Astrocyte of the cerebellum (primary cell): ENCODE measurements at regions of chr22 and their contacts with region 1.

Region 1: GRCh38 chr22:45640291-45640940 is 31.2 kb upstream of the ATXN10 start:
- DNase-seq: no peak
- H3K4me3 ChIP-seq: no peak overlapping the region
- CTCF ChIP-seq: no peak

Region 2: DNA sequence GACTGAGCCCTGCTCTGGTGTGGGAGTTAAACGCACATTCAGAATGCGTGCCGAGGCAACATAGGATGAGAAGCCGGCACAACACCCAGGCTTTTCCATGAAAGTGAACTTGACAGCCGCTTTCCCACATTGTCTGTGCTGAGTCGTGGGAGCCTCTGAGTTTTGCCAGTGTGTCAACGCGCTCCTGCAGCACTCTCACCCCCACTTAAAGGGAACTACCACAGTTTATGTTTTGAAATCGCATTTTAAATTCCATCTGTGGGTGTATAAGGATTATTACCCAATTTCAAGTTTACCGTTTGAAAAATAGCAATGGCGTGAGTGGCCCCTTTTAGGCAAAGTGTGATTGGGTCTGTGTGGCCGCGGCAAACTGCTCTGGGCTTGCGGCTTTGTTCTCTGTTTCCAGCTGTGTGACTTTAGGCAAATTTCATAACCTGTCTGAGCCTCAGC is 56.3 kb before region 1 on chr22:
- in situ Hi-C with region 1: loop called (anchors 5 kb)
- DNase-seq: no peak
- H3K4me3 ChIP-seq: no peak overlapping the region
- CTCF ChIP-seq: no peak

Region 3: DNA sequence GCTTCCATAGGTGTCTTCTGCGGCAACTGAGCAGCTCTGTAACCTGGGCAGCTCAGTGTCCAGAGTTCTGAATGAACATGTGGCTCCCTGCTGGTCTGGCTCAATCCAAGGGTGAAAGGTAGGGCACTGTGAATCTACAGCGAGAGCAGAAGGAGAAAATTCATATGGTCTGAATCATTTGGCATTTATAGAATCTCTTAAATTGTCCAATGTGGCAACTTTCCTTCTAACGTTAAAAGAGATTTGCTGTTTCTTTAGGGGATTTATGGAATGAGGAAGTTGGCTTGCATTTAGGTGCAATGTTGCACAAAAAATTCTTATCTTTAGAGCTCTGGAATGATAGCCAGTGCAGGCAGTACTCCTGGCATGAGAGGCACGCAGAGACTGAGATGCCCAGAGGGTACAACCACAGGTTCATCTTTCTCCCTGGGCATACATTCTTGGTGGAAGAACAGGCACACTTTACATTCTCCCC is 48.2 kb after region 1 on chr22:
- in situ Hi-C with region 1: no loop called
- DNase-seq: peak; percentile 79
- H3K4me3 ChIP-seq: no peak overlapping the region
- CTCF ChIP-seq: no peak

Region 4: DNA sequence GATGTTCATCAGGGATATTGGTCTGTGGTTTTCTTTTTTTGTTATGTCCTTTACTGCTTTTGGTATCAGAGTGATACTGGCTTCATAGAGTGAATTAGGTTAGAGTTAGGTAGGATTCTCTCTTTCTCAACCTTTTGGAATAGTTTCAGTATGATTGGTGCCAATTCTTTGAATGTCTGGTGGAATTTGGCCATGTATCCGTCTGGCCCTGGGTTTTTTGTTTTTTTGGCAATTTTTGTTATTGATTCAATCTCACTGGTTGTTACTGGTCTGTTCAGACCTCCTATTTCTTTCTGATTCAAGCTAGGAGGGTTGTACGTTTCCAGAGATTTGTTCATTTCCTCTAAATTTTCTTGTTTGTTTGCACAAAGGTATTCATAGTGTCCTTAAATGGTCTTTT is 85.7 kb after region 1 on chr22:
- in situ Hi-C with region 1: loop called (anchors 5 kb)
- DNase-seq: no peak
- H3K4me3 ChIP-seq: no peak overlapping the region
- CTCF ChIP-seq: no peak

Region 5: DNA sequence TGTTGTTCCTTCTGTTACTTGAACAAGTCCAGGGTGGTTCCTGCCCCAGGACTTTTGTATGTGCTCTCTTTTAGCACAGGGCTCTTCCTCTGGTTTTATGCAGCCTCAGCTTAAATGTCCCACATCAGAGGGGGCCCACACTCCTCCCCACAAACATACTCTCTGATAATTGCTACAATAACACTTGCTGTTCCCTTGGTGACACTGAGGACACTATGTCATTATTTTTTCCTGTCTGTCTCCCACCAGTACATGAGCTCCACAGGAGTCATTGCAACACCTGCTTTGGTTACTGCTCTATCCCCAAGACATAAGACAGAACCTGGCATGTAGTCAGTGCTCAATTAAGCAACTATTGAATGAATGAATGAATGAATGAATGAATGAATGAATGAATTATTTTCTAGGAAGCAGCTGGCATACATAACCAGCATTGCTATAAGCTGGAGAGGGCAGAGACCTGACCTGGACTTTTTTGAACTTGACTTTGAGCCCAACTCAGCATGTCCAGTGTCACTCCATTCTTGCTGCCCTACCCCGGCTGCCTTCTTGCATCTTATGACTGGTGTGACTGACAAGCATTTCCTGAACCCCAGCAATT is 344.0 kb after region 1 on chr22:
- in situ Hi-C with region 1: loop called (anchors 5 kb)
- DNase-seq: no peak
- H3K4me3 ChIP-seq: no peak overlapping the region
- CTCF ChIP-seq: no peak